Stomach (tissue), 19 donors: ENCODE measurements at regions of chr2 and their contacts with region 1.

Region 1: DNA sequence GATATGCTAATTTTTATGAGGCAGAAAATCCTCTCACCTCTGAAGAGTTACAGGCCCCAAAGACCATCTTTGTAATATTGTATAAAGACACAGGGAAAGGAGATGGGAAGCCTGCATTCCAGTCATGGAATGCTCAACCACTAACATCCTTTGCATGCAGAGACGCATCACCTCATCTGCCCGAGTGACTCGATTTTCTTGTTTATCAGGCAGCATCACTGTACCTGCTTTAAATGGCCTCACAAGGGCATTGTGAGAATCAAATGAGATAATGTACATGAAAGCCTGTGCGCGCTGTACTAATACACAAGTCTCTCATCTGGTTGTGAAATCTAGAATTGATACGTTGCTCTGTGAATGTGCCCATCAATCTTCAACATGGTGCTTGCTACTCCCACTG is 10.2 kb upstream of the TMEM247 start:
- DNase-seq: no peak
- H3K4me3 ChIP-seq: no peak overlapping the region
- H3K27ac ChIP-seq: no peak overlapping the region
- H3K4me1 ChIP-seq: peaks cover 0 to 7% (median 3%) of the 10 kb centered on the region in 4 donors
- H3K27me3 ChIP-seq: no peaks in the 10 kb centered on the region
- CTCF ChIP-seq: no peak
- EP300 ChIP-seq: no peak
- POLR2A ChIP-seq: no peak

Region 2: DNA sequence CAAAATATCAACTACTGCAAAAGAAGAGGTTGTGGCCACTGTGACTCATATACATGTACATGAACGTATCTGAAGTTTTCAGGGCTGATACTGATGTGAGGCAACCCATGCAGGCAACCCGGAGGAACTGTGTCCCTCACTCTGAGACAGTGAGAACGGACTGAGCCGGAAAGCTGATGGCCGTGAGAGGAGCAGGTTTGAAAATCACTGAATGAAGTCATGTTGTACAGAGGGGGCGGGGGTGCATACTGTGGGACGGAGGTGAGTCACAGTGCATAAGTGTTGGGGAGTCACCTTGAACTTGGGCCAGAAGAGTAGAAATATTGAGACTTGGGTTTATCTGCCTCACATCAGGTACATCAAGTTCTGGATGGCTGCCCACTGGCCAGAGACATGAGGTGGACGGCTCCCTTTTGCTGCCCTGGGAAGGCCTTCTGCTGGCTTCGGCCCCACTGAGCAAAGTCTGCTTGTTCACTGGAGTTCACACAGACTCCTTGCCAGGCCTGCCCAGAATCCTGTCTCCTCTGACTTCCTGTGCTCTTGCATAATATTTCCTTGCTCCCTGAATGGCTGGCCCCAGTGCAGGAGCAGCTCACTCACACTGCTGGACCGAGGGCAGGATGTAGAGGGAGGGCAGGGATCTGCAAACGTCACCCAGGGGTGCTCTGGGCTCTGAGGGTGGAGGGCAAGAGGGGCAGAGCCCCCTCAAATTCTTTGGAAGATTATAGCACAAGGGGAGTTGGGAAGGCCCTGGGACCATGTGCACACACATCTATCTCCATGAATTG is 153.8 kb before region 1 on chr2:
- intact Hi-C with region 1: no loop called
- DNase-seq: peak; percentile 79 to 91
- H3K4me3 ChIP-seq: no peak overlapping the region
- H3K27ac ChIP-seq: peak overlapping the region; percentile 78 to 87 (median 83)
- H3K4me1 ChIP-seq: peaks cover 31 to 91% (median 56%) of the 10 kb centered on the region in 4 donors
- H3K27me3 ChIP-seq: no peaks in the 10 kb centered on the region
- CTCF ChIP-seq: no peak
- EP300 ChIP-seq: no peak
- POLR2A ChIP-seq: no peak

Region 3: GRCh38 chr2:46645681-46646162 is 176.6 kb after region 1 on chr2:
- intact Hi-C with region 1: loop called (anchors 5 kb)
- DNase-seq: peak; percentile 29 to 68
- H3K4me3 ChIP-seq: no peak overlapping the region
- H3K27ac ChIP-seq: peak overlapping the region in 4 of 5 donors; percentile 20 to 57 (median 38)
- H3K4me1 ChIP-seq: peaks cover 0 to 40% (median 9%) of the 10 kb centered on the region in 4 donors
- H3K27me3 ChIP-seq: no peaks in the 10 kb centered on the region
- CTCF ChIP-seq: no peak
- EP300 ChIP-seq: no peak
- POLR2A ChIP-seq: no peak